ENCODE measurements at regions of chr13 and their contacts with region 1.

Region 1: GRCh38 chr13:75704579-75705320 is 68.6 kb downstream of the LMO7 start:
- DNase-seq: peak; percentile 82
- H3K4me3 ChIP-seq: peak overlapping the region in 2 of 3 experiments; percentile 26 to 34
- H3K27ac ChIP-seq: peak overlapping the region; percentile 99
- H3K4me1 ChIP-seq: peaks cover 19% of the 10 kb centered on the region
- H3K27me3 ChIP-seq: no peaks in the 10 kb centered on the region
- CTCF ChIP-seq: peak; percentile 26 to 47

Region 2: DNA sequence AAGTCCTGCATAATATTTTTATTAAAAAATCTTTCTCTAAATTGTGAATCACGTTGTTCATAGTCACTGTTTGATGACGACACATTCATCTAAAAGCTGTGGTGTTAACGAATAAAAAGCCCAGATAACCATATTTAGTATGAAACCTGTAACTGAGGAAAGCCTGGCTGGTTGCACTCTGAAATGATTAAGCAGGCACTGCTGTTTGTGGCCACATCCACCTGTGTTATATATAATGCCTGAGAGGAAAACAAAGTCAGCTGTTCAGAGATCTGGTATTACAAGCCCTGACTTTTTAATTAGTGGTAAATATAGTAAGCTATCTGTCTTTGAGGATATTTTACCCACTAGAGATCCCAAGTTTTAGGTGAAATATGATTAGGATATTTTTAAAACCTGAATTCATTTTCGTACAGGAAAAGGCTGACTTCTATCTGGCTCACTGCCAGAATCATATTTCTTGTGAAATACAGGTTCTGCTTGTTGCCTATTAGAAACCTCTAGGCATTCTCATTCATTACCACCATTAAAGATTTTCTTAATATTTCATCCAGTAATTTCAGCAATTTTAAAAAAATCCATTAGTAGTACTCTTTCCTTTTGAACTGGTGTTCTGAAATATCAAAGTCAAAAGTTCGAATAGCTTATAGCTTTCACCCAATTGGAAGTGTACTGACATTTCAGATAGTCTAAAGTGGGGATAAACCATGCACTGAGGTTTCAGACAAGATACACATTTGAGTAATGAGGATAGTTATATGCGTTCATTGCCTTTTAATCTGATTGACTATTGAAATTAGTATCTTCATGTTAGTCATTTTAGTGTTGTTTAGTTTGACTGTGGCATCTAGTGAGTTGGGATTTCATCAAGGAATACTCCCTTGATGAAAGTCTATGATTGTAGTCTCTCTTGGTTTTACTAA is 11.1 kb after region 1 on chr13:
- CTCF ChIA-PET with region 1: no interaction called
- dilution Hi-C with region 1: no loop called
- in situ Hi-C with region 1: no loop called
- intact Hi-C with region 1: loop called (anchors 1 kb)
- DNase-seq: peak; percentile 53
- H3K4me3 ChIP-seq: no peak overlapping the region
- H3K27ac ChIP-seq: peak overlapping the region; percentile 94
- H3K4me1 ChIP-seq: peaks cover 10% of the 10 kb centered on the region
- H3K27me3 ChIP-seq: no peaks in the 10 kb centered on the region
- CTCF ChIP-seq: no peak

Region 3: DNA sequence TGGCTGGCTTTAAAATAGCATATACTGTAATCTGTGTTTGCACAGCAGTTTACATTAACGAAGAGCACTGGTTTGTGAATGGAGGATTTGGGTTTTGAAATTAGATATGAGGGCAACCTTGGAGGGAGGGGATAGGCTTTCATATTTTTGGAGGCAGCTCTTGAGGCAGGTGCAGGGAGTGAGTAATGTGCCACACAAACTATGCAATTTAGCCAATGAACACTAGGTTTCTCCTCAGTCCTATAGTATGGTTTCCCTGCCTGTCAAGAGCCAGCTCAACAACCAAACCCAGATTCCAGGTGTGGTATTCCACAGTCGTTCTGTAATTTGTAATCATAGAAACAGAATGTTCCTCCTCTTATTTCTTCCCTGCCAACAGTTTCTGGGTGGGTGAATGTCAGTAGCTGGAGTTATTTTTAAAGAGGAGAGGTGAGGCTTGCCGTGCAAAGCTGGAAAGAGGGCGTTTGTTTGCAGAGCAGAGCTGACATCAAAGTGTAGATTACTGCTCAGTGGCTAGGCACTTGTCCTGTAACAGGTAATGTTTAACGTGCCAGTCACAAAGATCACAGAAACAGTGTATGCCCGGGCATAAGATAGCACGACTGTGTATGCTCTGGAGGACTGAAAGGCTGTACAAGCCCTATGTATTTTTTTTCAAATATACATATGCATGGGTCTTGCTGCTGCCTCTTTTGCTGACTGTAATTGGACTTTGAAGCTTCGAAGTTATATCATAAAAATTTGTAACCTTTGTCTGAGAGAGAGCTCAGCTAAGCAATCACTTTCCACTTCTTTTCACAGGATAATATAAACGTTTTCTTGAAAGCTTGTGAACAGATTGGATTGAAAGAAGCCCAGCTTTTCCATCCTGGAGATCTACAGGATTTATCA is 55.6 kb after region 1 on chr13:
- CTCF ChIA-PET with region 1: interaction called, 3 read pairs
- dilution Hi-C with region 1: no loop called
- in situ Hi-C with region 1: no loop called
- intact Hi-C with region 1: loop called (anchors 1 kb)
- DNase-seq: peak; percentile 94
- H3K4me3 ChIP-seq: peak overlapping the region; percentile 50 to 70 (median 53)
- H3K27ac ChIP-seq: peak overlapping the region; percentile 100
- H3K4me1 ChIP-seq: peaks cover 12% of the 10 kb centered on the region
- H3K27me3 ChIP-seq: no peaks in the 10 kb centered on the region
- CTCF ChIP-seq: peak; percentile 8 to 56

Region 4: GRCh38 chr13:76023652-76024051 is 318.9 kb after region 1 on chr13:
- CTCF ChIA-PET with region 1: no interaction called
- dilution Hi-C with region 1: no loop called
- in situ Hi-C with region 1: loop called (anchors 25 kb)
- intact Hi-C with region 1: loop called (anchors 1 kb)
- DNase-seq: peak; percentile 79
- H3K4me3 ChIP-seq: no peak overlapping the region
- H3K27ac ChIP-seq: peak overlapping the region; percentile 55
- H3K4me1 ChIP-seq: peaks cover 18% of the 10 kb centered on the region
- H3K27me3 ChIP-seq: no peaks in the 10 kb centered on the region
- CTCF ChIP-seq: no peak

Measured in mammary epithelial cell (primary cell).